Colonic mucosa (tissue), 4 donors: ENCODE measurements at regions of chr4 and their contacts with region 1.

Region 1: GRCh38 chr4:154024097-154024694 is 235.3 kb upstream of the SFRP2 start:
- DNase-seq: no peak
- H3K4me3 ChIP-seq: no peak overlapping the region
- H3K27ac ChIP-seq: no peak overlapping the region
- H3K4me1 ChIP-seq: no peaks in the 10 kb centered on the region
- H3K27me3 ChIP-seq: no peaks in the 10 kb centered on the region
- CTCF ChIP-seq: no peak

Region 2: DNA sequence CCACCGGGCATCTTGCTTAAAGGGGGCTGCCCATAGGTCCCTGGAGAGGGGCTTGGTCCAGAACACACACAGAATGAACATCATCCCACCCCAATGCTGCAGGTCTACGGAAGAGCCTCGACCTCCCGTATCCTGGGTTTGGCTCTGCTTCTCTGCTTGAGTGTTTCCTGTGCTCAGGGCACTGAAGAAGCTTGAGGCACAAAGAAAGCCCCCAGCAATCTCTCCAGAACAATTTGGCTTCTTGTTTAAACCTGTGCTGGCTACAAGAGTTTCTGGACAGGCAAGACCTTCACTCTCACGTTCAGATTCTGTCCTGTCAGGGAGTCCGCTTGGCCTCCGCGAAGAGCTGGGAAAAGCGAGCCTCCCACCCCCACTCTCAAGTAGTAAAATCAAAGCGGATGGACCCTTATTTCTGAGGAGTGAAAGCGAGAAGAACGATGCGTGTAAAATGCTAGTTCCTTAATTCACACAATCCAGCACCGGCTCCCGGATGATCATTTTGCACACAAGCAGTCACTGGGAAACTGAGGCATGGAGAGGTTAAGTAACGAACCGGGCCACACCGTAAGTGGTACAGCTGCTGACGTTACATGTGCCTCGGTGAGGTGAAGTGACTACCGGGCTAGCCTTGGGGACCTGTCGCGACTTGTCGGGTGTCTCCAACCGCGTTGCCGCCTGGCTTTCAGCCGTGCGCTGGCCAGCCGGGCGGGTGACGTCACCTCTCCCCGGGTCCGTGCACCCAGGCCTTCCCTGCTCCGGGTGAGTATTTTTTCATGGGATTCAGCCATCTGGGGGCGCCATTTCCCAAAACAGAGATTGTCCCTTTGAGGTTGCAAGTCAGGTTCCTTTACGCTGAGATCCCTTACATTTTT is 232.2 kb before region 1 on chr4:
- intact Hi-C with region 1: loop called (anchors 10 kb)
- DNase-seq: peak; percentile 72
- H3K4me3 ChIP-seq: no peak overlapping the region
- H3K27ac ChIP-seq: no peak overlapping the region
- H3K4me1 ChIP-seq: peaks cover 6% of the 10 kb centered on the region
- H3K27me3 ChIP-seq: peaks cover 51% of the 10 kb centered on the region
- CTCF ChIP-seq: no peak

Region 3: DNA sequence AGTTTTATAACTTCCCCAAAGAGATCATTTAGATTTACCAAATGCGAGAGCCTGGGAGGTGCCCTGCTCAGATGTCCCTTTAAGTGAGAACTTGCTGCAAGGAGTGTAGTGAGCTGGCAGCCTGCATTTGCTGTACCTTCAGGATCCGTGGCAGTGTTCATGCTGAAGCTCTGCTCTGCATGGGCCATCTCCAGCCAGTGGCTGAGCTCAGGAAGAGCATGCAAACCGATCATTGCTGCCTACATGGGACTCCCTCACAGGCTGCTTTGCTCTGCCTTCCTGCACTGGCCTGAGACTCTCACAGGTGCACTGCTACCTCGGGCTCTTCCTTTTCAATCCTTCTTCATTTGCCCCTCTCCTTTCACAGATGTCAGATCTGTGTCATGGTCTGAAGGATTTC is 83.3 kb before region 1 on chr4:
- intact Hi-C with region 1: no loop called
- DNase-seq: no peak
- H3K4me3 ChIP-seq: no peak overlapping the region
- H3K27ac ChIP-seq: no peak overlapping the region
- H3K4me1 ChIP-seq: no peaks in the 10 kb centered on the region
- H3K27me3 ChIP-seq: no peaks in the 10 kb centered on the region
- CTCF ChIP-seq: no peak